Breast epithelium (tissue), 4 donors: ENCODE measurements at regions of chr11 and their contacts with region 1.

Region 1: GRCh38 chr11:3368199-3368598 is 10.7 kb downstream of the ZNF195 start:
- DNase-seq: no peak
- H3K4me3 ChIP-seq: no peak overlapping the region
- H3K27ac ChIP-seq: no peak overlapping the region
- H3K4me1 ChIP-seq: no peaks in the 10 kb centered on the region
- H3K27me3 ChIP-seq: no peaks in the 10 kb centered on the region
- CTCF ChIP-seq: no peak
- POLR2A ChIP-seq: no peak

Region 2: GRCh38 chr11:2750682-2751387 is 617.4 kb before region 1 on chr11:
- intact Hi-C with region 1: no loop called
- DNase-seq: peak in 1 of 2 donors; percentile 48
- H3K4me3 ChIP-seq: no peak overlapping the region
- H3K27ac ChIP-seq: no peak overlapping the region
- H3K4me1 ChIP-seq: no peaks in the 10 kb centered on the region
- H3K27me3 ChIP-seq: no peaks in the 10 kb centered on the region
- CTCF ChIP-seq: no peak
- POLR2A ChIP-seq: no peak

Region 3: GRCh38 chr11:3049430-3050243 is 318.6 kb before region 1 on chr11:
- intact Hi-C with region 1: loop called (anchors 10 kb)
- DNase-seq: peak; percentile 73
- H3K4me3 ChIP-seq: peak overlapping the region in 1 of 3 donors; percentile 21
- H3K27ac ChIP-seq: peak overlapping the region; percentile 81 to 94
- H3K4me1 ChIP-seq: peaks cover 8 to 9% of the 10 kb centered on the region in 2 donors
- H3K27me3 ChIP-seq: no peaks in the 10 kb centered on the region
- CTCF ChIP-seq: peak in 1 of 3 donors; percentile 34
- POLR2A ChIP-seq: no peak